AG04450 (cell line): ENCODE measurements at regions of chrX and their contacts with region 1.

Region 1: GRCh38 chrX:43939187-43939926 is 33.8 kb downstream of the NDP start:
- DNase-seq: no peak
- H3K4me3 ChIP-seq: no peak overlapping the region
- H3K27ac ChIP-seq: no peak overlapping the region
- H3K27me3 ChIP-seq: no peaks in the 10 kb centered on the region
- CTCF ChIP-seq: no peak

Region 2: GRCh38 chrX:43836435-43837184 is 102.7 kb before region 1 on chrX:
- CTCF ChIA-PET with region 1: interaction called, 12 read pairs
- POLR2A ChIA-PET with region 1: no interaction called
- DNase-seq: peak; percentile 2
- H3K4me3 ChIP-seq: no peak overlapping the region
- H3K27ac ChIP-seq: no peak overlapping the region
- H3K27me3 ChIP-seq: no peaks in the 10 kb centered on the region
- CTCF ChIP-seq: peak; percentile 57

Region 3: DNA sequence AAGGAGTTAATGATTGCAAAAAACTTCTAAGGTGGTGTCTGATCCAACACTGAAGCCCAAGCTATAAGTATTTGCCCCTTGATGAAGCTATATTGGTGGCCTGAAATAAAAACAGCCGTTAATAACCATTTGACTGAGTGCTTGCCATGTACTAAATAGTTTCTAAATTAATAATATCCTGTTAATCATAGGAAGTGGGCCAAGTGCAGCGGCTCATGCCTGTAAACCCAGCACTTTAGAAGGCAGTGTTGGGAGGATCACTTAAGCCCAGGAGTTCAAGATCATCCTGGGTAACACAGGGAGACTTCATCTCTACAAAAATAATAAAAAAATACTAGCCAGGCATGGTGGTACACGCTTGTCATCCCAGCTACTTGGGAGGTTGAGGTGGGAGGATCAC is 25.6 kb after region 1 on chrX:
- CTCF ChIA-PET with region 1: no interaction called
- POLR2A ChIA-PET with region 1: no interaction called
- DNase-seq: no peak
- H3K4me3 ChIP-seq: no peak overlapping the region
- H3K27ac ChIP-seq: no peak overlapping the region
- H3K27me3 ChIP-seq: no peaks in the 10 kb centered on the region
- CTCF ChIP-seq: no peak